H1 (cell line): ENCODE measurements at regions of chr1 and their contacts with region 1.

Region 1: DNA sequence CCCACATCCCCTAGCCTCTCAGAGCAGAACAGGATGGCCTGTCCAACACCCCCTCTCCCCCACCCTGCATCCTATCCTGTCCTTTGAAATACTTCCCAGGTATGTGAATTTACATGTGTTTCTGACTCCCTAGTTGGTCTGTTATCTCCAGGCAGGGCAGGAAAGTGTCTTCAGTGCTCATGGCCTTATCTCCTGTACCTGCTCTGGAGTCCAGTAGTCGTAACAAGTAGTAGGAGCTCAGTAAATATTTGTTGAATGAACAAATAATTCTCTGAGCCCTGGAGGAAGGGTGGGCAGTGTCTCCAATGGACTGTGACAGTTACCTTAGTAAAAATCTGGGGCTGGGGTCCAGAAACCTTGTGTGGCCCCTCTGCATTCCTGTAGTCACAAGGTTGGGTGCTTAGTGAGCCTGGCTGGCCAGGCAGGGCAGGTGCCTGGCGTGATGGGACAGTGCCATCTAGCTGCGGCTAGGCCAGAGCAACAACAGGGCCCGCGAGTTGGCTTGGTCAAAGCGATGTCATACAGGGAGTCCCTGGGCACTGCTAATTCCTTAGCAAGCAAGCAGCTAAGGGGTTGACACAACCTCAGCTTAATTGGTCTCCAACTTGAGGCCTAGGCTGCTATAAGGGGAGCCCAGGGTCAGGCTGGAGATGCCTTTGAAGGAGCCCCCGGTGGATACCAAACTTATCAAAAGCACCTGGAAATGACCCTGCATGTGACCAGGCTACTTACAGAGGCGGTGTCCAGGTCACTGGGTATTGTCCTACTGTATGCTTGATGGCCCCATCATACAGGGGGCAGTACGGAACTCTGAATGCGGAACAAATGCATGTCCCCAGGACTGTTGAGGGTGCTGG is 89.0 kb upstream of the PPM1J start:
- DNase-seq: peak in 1 of 2 experiments; percentile 80
- H3K4me3 ChIP-seq: no peak overlapping the region
- H3K27ac ChIP-seq: no peak overlapping the region
- H3K4me1 ChIP-seq: peaks cover 2 to 6% (median 4%) of the 10 kb centered on the region in 4 experiments; a peak in 5 of 7 replicates
- H3K27me3 ChIP-seq: no peaks in the 10 kb centered on the region
- CTCF ChIP-seq: peak; percentile 98 to 99 (median 98)
- EP300 ChIP-seq: no peak
- POLR2A ChIP-seq: no peak
- RAD21 ChIP-seq: peak; percentile 100

Region 2: GRCh38 chr1:112729909-112730308 is 74.2 kb before region 1 on chr1:
- CTCF ChIA-PET with region 1: interaction called, 26 read pairs
- POLR2A ChIA-PET with region 1: interaction called, 5 read pairs
- DNase-seq: no peak
- H3K4me3 ChIP-seq: no peak overlapping the region
- H3K27ac ChIP-seq: no peak overlapping the region
- H3K4me1 ChIP-seq: no peaks in the 10 kb centered on the region
- H3K27me3 ChIP-seq: peaks cover 0 to 3% (median 0%) of the 10 kb centered on the region in 4 experiments; a peak in 1 of 7 replicates
- CTCF ChIP-seq: no peak
- EP300 ChIP-seq: no peak
- POLR2A ChIP-seq: no peak
- RAD21 ChIP-seq: no peak

Region 3: GRCh38 chr1:112788561-112788960 is 15.6 kb before region 1 on chr1:
- CTCF ChIA-PET with region 1: interaction called, 21 read pairs
- POLR2A ChIA-PET with region 1: interaction called, 3 read pairs
- DNase-seq: no peak
- H3K4me3 ChIP-seq: no peak overlapping the region
- H3K27ac ChIP-seq: no peak overlapping the region
- H3K4me1 ChIP-seq: peaks cover 0 to 6% (median 3%) of the 10 kb centered on the region in 4 experiments; a peak in 5 of 7 replicates
- H3K27me3 ChIP-seq: no peaks in the 10 kb centered on the region; a peak in 1 of 7 replicates
- CTCF ChIP-seq: no peak
- EP300 ChIP-seq: no peak
- POLR2A ChIP-seq: no peak
- RAD21 ChIP-seq: no peak

Region 4: GRCh38 chr1:112872551-112872962 is 68.4 kb after region 1 on chr1:
- CTCF ChIA-PET with region 1: interaction called, 20 read pairs
- POLR2A ChIA-PET with region 1: no interaction called
- DNase-seq: no peak
- H3K4me3 ChIP-seq: no peak overlapping the region
- H3K27ac ChIP-seq: no peak overlapping the region
- H3K4me1 ChIP-seq: peaks cover 0 to 6% (median 2%) of the 10 kb centered on the region in 4 experiments; a peak in 6 of 7 replicates
- H3K27me3 ChIP-seq: no peaks in the 10 kb centered on the region; a peak in 1 of 7 replicates
- CTCF ChIP-seq: no peak
- EP300 ChIP-seq: no peak
- POLR2A ChIP-seq: no peak
- RAD21 ChIP-seq: no peak

Region 5: GRCh38 chr1:113042285-113043143 is 238.4 kb after region 1 on chr1:
- CTCF ChIA-PET with region 1: interaction called, 22 read pairs
- POLR2A ChIA-PET with region 1: no interaction called
- DNase-seq: peak; percentile 85 to 96
- H3K4me3 ChIP-seq: peak overlapping the region in 3 of 4 experiments; percentile 14 to 37 (median 21); a peak in 5 of 8 replicates
- H3K27ac ChIP-seq: peak overlapping the region; percentile 92
- H3K4me1 ChIP-seq: peaks cover 15 to 35% (median 28%) of the 10 kb centered on the region in 4 experiments
- H3K27me3 ChIP-seq: no peaks in the 10 kb centered on the region
- CTCF ChIP-seq: peak; percentile 65 to 76 (median 68)
- EP300 ChIP-seq: peak in 1 of 2 experiments; percentile 54; a peak in 1 of 3 replicates
- POLR2A ChIP-seq: peak in 1 of 2 experiments; percentile 50; a peak in 1 of 3 replicates
- RAD21 ChIP-seq: peak; percentile 91 to 93